Thyroid gland (tissue), 4 donors: ENCODE measurements at regions of chr7 and their contacts with region 1.

Region 1: GRCh38 chr7:143362131-143363015 is at the start of gene FAM131B:
- DNase-seq: peak in 1 of 2 donors; percentile 18
- H3K4me3 ChIP-seq: peak within 1 kb of the TSS in 2 of 3 donors; percentile 14 to 37
- H3K27ac ChIP-seq: no peak within 1 kb of the TSS
- H3K4me1 ChIP-seq: peaks cover 7 to 12% of the 10 kb centered on the region in 2 donors
- H3K27me3 ChIP-seq: peaks cover 11% of the 10 kb centered on the region
- CTCF ChIP-seq: no peak
- POLR2A ChIP-seq: no peak
- total RNA-seq, gene FAM131B: 0.11 to 0.54 TPM in 2 of 4 donors, not detected in the others

Region 2: DNA sequence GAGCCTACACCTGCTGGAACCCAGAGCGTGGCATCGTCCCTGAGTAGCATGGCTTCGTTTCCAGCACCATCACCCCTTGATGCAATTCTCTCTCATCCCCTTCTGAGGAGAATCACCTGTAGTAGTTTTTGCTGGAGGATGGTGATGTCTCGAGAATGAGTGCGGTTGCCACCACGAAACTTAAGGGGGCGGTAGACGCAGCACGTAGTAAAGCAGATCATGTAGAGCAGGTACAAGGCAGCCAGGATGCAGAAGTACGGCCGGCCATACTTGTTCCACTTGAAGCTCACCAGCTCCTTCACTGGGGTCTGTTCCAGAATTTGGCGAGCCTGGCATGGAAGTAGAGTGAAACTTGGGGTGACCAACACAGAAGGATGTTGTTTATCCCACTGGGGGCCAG is 437.0 kb before region 1 on chr7:
- intact Hi-C with region 1: no loop called
- DNase-seq: no peak
- H3K4me3 ChIP-seq: no peak overlapping the region
- H3K27ac ChIP-seq: no peak overlapping the region
- H3K4me1 ChIP-seq: no peaks in the 10 kb centered on the region
- H3K27me3 ChIP-seq: no peaks in the 10 kb centered on the region
- CTCF ChIP-seq: no peak
- POLR2A ChIP-seq: no peak

Region 3: DNA sequence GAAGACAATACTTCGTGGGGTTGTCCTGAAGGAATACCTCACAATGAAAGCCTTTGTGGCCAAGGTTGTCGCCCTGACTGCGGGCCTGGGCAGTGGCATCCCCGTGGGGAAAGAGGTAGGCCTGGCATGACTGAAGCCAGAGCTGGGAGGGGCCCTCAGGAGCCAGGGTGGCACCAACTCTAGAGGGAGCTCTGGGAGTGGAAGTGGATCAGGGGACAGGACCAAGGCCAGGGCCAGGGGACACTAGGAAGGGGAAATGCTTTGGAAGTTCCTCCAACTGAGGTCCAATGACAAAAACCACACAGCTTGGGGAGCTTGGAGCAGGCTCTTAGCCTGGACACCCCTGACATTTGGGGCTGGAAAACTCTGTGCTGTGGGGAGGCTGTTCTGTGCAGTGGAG is 40.6 kb before region 1 on chr7:
- intact Hi-C with region 1: loop called (anchors 5 kb)
- DNase-seq: no peak
- H3K4me3 ChIP-seq: no peak overlapping the region
- H3K27ac ChIP-seq: no peak overlapping the region
- H3K4me1 ChIP-seq: peaks cover 8 to 15% of the 10 kb centered on the region in 2 donors
- H3K27me3 ChIP-seq: no peaks in the 10 kb centered on the region
- CTCF ChIP-seq: no peak
- POLR2A ChIP-seq: no peak